GM18951 (cell line): ENCODE measurements at regions of chr10 and their contacts with region 1.

Region 1: GRCh38 chr10:21732067-21732772 is 198.2 kb downstream of the MLLT10 start:
- POLR2A ChIP-seq: no peak

Region 2: GRCh38 chr10:21278491-21279239 is 453.6 kb before region 1 on chr10:
- in situ Hi-C with region 1: loop called (anchors 25 kb)
- POLR2A ChIP-seq: no peak

Region 3: GRCh38 chr10:21424459-21424861 is 307.8 kb before region 1 on chr10:
- in situ Hi-C with region 1: no loop called
- POLR2A ChIP-seq: no peak

Region 4: DNA sequence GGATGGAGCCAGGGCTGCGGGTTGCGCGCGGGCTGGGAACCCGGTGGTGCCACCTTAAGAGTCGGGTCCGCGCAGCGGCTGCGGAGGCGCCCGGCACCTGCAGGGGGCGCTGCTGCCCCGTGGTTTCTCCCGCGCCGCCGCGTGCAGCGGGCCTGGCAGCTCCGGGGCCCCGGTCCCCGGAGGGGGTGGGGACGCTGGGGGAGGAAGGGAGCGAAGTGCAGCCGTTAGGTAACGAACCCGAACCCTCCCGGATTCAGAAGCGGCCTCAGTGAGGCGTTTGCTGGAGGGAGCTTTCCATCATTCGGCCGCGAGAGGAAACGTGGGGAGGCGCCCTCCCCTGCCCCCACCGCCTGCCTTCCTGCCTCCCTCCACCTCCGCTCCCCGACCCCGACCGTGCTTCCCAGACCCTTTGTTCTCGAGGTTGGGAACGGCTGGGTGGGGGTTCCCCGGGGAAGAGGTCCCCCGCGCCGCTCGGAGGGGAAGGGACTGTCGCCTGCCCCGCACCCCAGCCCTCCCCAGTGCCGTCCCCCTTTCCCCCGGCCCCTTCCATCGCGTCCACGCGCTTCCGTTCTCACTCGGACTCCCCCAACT is 236.4 kb before region 1 on chr10:
- in situ Hi-C with region 1: loop called (anchors 10 kb)
- POLR2A ChIP-seq: peak; percentile 43

Region 5: DNA sequence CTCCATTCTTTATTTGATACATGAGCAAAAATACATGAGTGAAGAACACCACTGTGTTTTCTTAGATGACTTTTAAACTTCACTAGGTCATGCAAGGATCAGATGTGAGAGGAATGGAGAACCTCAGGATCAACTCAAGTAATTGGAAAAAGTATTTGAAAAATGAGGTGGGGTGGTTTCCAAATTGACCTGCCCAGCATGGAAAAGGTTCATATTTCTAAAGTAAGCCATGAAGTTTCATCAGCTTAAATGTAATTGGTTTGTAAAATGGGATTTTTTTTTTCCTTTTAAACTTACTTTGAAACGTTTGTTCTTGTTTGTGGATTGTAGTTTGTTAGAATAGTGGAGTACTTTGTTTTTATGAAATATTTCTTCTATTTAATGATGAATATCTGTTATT is 63.4 kb before region 1 on chr10:
- in situ Hi-C with region 1: no loop called
- POLR2A ChIP-seq: no peak